K562 (cell line): ENCODE measurements at regions of chr3 and their contacts with region 1.

Region 1: GRCh38 chr3:185188816-185189215 is 36.0 kb upstream of the C3orf70 start:
- DNase-seq: no peak
- ATAC-seq: no peak
- H3K4me3 ChIP-seq: no peak overlapping the region
- H3K27ac ChIP-seq: no peak overlapping the region
- H3K4me1 ChIP-seq: no peaks in the 10 kb centered on the region
- H3K27me3 ChIP-seq: peaks cover 3 to 10% of the 10 kb centered on the region in 2 experiments; a peak in 2 of 5 replicates
- CTCF ChIP-seq: no peak
- EP300 ChIP-seq: no peak
- POLR2A ChIP-seq: no peak
- RAD21 ChIP-seq: no peak

Region 2: GRCh38 chr3:184864000-184864399 is 324.8 kb before region 1 on chr3:
- CTCF ChIA-PET with region 1: no interaction called
- POLR2A ChIA-PET with region 1: no interaction called
- in situ Hi-C with region 1: loop called (anchors 10 kb)
- intact Hi-C with region 1: no loop called
- DNase-seq: no peak
- ATAC-seq: no peak
- H3K4me3 ChIP-seq: no peak overlapping the region
- H3K27ac ChIP-seq: no peak overlapping the region
- H3K4me1 ChIP-seq: no peaks in the 10 kb centered on the region
- H3K27me3 ChIP-seq: no peaks in the 10 kb centered on the region
- CTCF ChIP-seq: no peak
- EP300 ChIP-seq: no peak
- POLR2A ChIP-seq: no peak
- RAD21 ChIP-seq: no peak